K562 (cell line): ENCODE measurements at regions of chr6 and their contacts with region 1.

Region 1: DNA sequence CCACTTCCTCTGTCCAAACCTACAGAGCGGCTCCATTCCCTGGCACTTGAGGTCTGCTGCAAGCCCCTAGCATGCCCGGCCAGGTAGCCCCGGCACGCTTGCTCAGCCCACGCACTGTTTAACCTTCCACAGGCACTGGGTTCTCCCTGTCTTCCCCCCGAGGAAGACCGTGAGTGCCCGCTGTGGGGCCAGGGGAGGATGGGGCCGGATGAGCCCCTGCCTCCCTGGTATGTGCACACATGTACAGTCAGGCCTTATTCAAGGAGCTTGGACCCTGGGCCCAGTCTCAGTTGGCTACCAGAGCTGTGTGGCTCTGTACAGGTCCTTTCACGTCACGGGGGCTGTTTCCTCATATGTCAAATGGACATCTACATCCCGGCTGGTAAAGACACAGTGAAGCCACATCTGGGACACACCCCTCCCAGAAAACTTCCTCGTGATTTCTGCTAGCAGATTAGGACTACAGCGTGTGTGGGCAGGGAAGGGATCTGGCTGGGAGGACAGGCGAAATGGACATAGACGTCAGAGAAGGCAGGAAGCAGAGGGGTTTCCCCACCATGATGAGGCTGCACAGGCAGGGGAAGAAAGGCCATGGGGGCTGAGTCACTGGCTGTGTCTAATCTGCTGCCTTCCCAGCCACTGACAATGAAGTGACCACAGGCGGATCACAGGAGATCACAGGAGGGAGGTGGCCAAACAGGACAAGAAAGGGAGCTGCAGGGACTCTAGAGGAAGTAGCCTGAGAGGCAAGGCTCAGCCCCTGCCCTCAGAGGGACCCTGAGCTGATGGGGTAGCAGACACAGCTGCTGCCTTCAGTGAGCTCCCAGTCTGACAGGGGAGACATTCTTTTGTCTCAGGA is 62.9 kb downstream of the MRPL14 start:
- DNase-seq: peak; percentile 61 to 95 (median 80)
- ATAC-seq: peak; percentile 87
- H3K4me3 ChIP-seq: no peak overlapping the region
- H3K27ac ChIP-seq: peak overlapping the region; percentile 74
- H3K4me1 ChIP-seq: peaks cover 64 to 71% of the 10 kb centered on the region in 2 experiments
- H3K27me3 ChIP-seq: no peaks in the 10 kb centered on the region
- CTCF ChIP-seq: no peak; a peak in 1 of 6 replicates
- EP300 ChIP-seq: peak; percentile 82
- POLR2A ChIP-seq: peak; percentile 48; the same call in 1 of the 2 replicates
- RAD21 ChIP-seq: peak; percentile 26 to 39; a peak in 2 of 4 replicates

Region 2: DNA sequence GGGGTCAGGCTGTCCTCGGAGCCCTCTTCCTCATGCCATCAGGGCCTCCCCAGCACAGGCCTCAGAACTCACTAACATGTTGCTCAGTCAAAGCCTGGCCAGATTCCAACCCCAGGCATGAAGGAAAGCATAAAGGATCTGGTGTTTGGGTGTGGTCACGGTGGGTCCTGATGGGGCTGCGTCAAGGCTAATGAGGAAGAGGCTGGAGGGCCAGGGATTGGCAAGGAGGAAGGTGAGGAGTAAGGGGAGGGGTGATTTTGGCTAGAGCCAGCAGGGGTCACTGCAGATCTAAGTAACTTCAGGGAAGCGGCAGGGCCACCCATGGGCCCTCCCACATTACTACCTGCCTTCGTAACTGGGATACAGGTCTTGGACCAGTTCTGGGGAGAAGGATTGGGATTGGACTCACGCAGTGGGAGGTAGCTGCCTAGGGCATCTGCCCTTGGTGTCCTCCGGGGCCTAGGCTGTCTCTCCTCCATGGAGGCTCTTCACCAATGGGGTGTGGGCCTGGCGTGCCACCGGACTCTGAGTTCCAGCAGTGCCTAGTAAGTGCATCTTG is 340.5 kb before region 1 on chr6:
- CTCF ChIA-PET with region 1: no interaction called
- POLR2A ChIA-PET with region 1: no interaction called
- in situ Hi-C with region 1: loop called (anchors 5 kb)
- intact Hi-C with region 1: no loop called
- DNase-seq: peak; percentile 91 to 94 (median 93)
- ATAC-seq: peak; percentile 87
- H3K4me3 ChIP-seq: no peak overlapping the region
- H3K27ac ChIP-seq: peak overlapping the region; percentile 68; the same call in 1 of the 3 replicates
- H3K4me1 ChIP-seq: peaks cover 25 to 31% of the 10 kb centered on the region in 2 experiments
- H3K27me3 ChIP-seq: no peaks in the 10 kb centered on the region; a peak in 1 of 5 replicates
- CTCF ChIP-seq: peak; percentile 91 to 98 (median 97)
- EP300 ChIP-seq: 0 out of 2 replicates have a peak, but pooled peaks have one; percentile 2
- POLR2A ChIP-seq: no peak
- RAD21 ChIP-seq: peak; percentile 93 to 97

Region 3: GRCh38 chr6:43838276-43839036 is 225.9 kb before region 1 on chr6:
- CTCF ChIA-PET with region 1: no interaction called
- POLR2A ChIA-PET with region 1: no interaction called
- in situ Hi-C with region 1: no loop called
- intact Hi-C with region 1: loop called (anchors 2 kb)
- DNase-seq: peak; percentile 73 to 84 (median 78)
- ATAC-seq: peak; percentile 87
- H3K4me3 ChIP-seq: no peak overlapping the region
- H3K27ac ChIP-seq: peak overlapping the region; percentile 44; the same call in 2 of the 3 replicates
- H3K4me1 ChIP-seq: peaks cover 30 to 38% of the 10 kb centered on the region in 2 experiments
- H3K27me3 ChIP-seq: peaks cover 5 to 12% of the 10 kb centered on the region in 2 experiments; a peak in 4 of 5 replicates
- CTCF ChIP-seq: peak; percentile 73 to 88 (median 81)
- EP300 ChIP-seq: 0 out of 2 replicates have a peak, but pooled peaks have one; percentile 28
- POLR2A ChIP-seq: no peak
- RAD21 ChIP-seq: peak; percentile 66 to 76

Region 4: DNA sequence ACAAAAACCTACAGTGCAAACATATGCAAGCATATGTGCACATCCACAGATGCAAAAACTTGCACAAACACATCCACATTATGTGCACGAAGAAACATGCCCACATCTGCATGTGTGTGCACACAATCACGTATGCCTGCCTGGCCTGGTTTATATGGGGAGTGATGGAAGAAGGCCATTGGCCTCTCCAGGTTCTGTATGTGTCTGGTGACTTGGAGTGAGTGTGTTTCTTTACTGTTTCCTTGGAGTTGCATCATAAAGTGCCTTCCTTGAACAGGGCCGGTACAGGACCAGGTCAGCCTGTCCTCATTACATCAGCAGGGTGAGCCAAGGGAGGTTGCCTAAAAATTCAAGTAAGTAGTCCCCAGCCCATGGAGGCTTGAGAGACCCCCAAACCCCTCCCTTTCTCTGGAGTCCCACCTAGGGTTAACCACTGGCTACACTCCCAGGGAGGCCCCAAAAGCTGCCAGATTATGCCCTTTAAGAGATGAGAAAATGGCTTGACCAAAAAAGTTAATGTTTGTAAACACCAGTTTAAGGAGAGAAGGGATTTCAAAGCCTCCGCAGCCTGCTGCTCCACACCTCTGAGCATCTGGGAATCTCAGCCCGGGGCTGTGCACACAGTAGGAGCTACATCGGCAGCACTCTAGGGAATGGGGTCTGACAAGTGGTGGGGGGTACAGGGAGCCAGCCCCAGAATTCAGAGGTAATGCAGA is 153.5 kb before region 1 on chr6:
- CTCF ChIA-PET with region 1: no interaction called
- POLR2A ChIA-PET with region 1: interaction called, 4 read pairs
- in situ Hi-C with region 1: no loop called
- intact Hi-C with region 1: loop called (anchors 1 kb)
- DNase-seq: peak in 1 of 4 experiments; percentile 73
- ATAC-seq: peak; percentile 89
- H3K4me3 ChIP-seq: peak overlapping the region; percentile 4; the same call in 1 of the 2 replicates
- H3K27ac ChIP-seq: peak overlapping the region; percentile 72
- H3K4me1 ChIP-seq: peaks cover 18 to 63% of the 10 kb centered on the region in 2 experiments
- H3K27me3 ChIP-seq: no peaks in the 10 kb centered on the region
- CTCF ChIP-seq: no peak
- EP300 ChIP-seq: peak; percentile 97
- POLR2A ChIP-seq: no peak
- RAD21 ChIP-seq: peak; percentile 30 to 43; a peak in 3 of 4 replicates

Region 5: GRCh38 chr6:44010411-44011349 is 53.6 kb before region 1 on chr6:
- CTCF ChIA-PET with region 1: no interaction called
- POLR2A ChIA-PET with region 1: interaction called, 3 read pairs
- in situ Hi-C with region 1: no loop called
- intact Hi-C with region 1: loop called (anchors 5 kb)
- DNase-seq: no peak
- ATAC-seq: 0 out of 3 replicates have a peak, but pooled peaks have one; percentile 9
- H3K4me3 ChIP-seq: no peak overlapping the region
- H3K27ac ChIP-seq: no peak overlapping the region
- H3K4me1 ChIP-seq: peaks cover 4 to 17% of the 10 kb centered on the region in 2 experiments; a peak in 4 of 5 replicates
- H3K27me3 ChIP-seq: no peaks in the 10 kb centered on the region
- CTCF ChIP-seq: no peak; a peak in 1 of 6 replicates
- EP300 ChIP-seq: no peak
- POLR2A ChIP-seq: no peak
- RAD21 ChIP-seq: no peak

Region 6: GRCh38 chr6:44353336-44353735 is 289.0 kb after region 1 on chr6:
- CTCF ChIA-PET with region 1: no interaction called
- POLR2A ChIA-PET with region 1: no interaction called
- in situ Hi-C with region 1: no loop called
- intact Hi-C with region 1: no loop called
- DNase-seq: no peak
- ATAC-seq: peak; percentile 46; the same call in 2 of the 3 replicates
- H3K4me3 ChIP-seq: no peak overlapping the region
- H3K27ac ChIP-seq: no peak overlapping the region
- H3K4me1 ChIP-seq: no peaks in the 10 kb centered on the region
- H3K27me3 ChIP-seq: peaks cover 0 to 14% of the 10 kb centered on the region in 2 experiments; a peak in 4 of 5 replicates
- CTCF ChIP-seq: no peak
- EP300 ChIP-seq: no peak
- POLR2A ChIP-seq: no peak
- RAD21 ChIP-seq: no peak